Posterior vena cava (tissue), 2 donors: ENCODE measurements at regions of chr11 and their contacts with region 1.

Region 1: DNA sequence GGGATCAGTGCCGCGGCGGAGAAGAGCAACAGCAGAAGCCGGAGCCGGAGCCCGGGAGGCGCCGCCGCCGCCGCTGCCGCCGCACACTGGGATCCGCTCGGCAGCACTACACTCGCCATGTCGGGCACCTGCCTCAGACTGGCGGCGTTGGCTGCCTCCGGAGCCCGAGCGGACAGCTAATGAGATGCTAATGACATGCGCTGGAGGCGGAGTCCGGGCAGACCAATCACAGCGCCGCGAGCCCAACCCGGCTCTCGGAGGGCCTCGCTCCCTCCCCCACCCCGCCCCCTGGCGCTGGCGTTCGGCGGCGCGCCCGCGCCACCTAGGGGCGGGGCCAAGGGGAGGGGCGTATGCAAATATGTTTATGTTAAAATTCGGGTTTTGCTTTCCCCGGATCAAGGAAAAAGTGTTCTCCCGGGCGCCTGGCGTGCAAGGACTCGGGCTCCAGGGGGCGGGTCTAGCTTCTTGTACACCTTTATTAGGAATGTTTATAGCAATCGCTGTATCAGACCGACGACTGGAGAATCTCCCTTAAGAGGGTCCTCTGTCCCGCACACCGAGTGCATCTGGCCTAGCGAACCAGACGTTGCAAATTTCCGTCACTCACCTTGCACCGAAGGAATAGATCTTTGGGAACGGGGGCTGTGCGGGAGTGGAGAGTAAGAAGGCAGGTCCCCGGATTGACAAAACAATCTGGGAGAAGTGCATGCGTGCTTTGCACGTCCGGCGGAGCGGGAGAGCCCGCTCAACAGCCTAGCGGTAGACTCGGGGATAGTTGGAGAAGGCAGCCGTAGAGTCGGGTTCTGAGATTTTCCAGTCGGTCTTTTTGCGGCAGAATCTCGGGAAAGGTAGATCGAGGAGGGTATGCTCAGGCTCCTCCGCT is at the start of gene CADM1:
- DNase-seq: peak; percentile 95
- total RNA-seq, gene CADM1: 2.5 to 5.5 TPM

Region 2: GRCh38 chr11:114285599-114285998 is 1218.9 kb before region 1 on chr11:
- intact Hi-C with region 1: loop called in 1 of 2 experiments (anchors 5 kb)
- DNase-seq: no peak

Region 3: DNA sequence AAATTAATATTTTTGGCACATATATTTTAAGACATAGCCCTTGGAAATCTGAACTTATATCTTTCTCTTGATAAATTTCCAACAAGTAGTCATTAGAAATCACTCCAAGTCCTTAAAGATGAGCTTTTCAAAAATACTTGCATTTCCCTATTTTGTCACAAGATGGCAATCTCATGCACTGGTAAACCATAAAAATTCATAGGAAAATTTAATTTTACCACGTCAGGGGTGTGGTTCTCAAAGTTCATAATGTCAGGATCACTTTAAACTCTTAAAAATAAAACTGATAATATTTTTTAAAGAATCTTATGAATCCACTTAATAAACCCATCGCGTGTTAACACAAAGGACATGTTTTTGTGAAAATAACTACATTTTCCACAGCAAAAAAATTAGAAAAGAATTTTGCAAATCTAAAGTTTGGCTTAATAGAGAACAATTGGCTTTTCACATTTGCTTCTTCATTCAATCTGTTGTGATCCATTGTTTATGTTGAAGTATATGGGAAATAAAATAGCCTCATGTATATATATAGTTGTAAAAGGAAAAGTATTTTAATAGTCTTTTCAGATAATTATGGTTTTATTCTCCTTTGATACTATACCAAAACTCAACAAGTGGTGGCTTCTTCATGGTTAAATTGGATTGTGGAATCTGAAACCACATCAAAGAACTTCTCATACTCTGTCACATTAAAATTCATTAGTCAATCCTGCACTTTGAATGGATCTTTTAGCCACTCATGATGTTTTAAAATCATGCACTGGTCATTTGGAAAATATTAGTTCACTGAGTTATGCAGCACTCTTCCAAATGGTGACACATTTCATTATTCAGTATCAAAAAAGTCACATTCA is 169.4 kb before region 1 on chr11:
- intact Hi-C with region 1: loop called in 1 of 2 experiments (anchors 10 kb)
- DNase-seq: no peak

Region 4: DNA sequence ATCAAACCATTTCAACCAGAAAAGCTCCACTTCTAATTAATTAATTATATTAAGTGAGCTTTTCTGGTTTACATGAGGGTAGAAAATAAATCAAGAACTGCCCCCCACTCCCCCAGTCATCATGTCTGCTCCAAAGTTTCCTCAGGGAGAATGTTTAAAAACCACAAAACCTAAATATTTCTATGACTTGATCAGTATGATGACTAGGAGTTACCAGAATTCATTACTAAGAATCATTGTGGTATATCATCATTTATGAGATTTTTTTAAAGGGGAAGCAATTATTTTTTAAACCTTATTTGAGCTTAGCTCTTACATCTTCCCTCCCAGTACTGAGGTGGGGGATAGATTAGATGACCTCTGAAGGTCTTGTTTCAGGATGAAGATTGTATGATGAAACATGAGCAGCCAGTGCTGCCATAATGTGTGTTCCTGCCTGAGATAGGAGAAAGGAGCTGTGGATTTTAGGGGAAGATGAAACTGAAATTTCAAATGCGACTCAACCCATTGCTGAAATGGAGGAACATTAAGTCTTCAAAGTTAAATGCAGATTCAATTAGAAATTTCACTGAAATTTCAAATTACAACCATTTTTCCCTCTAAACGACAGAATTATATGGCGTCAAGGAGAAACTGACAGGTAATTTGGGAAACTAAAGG is 401.0 kb after region 1 on chr11:
- intact Hi-C with region 1: no loop called
- DNase-seq: no peak

Region 5: DNA sequence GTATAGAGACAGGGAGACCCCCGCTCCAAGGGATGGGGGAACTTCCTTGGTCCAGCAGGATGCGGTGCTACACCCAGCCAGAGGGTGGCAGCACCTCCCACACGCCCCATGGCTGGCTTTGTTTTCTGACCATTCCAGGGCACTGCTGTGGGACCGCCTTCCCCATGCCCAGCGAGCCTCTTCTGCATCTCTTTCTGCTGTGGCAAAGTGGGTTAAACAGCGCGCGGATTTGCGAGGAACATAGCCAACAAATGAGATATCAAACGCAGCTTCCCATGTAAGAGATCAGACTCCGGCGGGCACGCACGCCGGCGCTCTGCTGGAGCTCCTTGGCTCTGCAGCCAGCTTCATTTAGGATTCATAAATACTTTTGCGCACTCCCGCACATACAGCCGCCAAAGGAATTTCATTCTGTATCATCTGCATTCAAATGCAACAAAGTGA is 485.5 kb after region 1 on chr11:
- intact Hi-C with region 1: no loop called
- DNase-seq: no peak